ENCODE measurements at regions of chr15 and their contacts with region 1.

Region 1: DNA sequence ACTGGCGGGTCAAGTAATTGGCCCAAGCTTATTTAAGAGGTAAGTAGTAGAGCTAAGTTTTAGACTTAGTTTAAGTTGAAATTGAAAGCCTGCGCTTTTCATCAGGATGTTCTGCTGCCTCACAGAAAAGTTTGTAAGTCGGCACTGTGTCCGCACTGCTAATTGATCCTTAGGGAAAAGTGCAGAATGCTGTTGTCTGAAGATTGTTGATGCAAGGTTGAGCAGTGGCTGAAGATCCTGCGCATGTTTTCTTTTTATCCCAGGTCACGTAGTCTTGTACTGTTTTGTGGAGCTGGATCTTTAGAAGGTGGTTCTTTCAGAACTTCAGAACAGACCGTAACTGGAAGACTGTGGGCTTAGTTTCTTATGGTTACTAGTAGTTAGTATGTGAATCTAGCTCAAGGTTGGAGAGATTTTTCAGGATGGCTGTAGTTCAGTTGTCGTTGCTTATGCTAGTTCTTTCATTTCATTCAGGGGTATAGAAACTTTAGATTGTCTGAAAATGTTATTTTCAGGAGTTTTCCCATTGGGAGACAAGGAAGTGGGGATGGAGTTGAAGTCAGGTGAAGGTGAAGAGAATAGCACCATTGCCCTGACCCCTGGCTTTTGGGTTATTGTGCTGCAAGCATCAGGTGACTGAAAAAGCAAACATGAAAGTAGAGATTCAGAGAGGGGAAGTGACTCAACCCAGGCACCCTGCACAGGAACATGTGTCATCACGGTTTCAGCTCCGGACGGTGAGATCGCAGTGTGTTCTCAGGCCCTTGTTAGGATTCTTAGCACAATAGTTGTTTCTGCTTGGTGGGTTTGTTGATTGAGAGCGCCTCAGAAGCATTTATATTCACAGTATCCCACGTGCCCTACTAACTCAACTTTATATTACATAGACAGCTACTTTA is 32.8 kb downstream of the AKAP13 start:
- DNase-seq: peak; percentile 95
- H3K27ac ChIP-seq: peak overlapping the region; percentile 61
- CTCF ChIP-seq: no peak

Region 2: DNA sequence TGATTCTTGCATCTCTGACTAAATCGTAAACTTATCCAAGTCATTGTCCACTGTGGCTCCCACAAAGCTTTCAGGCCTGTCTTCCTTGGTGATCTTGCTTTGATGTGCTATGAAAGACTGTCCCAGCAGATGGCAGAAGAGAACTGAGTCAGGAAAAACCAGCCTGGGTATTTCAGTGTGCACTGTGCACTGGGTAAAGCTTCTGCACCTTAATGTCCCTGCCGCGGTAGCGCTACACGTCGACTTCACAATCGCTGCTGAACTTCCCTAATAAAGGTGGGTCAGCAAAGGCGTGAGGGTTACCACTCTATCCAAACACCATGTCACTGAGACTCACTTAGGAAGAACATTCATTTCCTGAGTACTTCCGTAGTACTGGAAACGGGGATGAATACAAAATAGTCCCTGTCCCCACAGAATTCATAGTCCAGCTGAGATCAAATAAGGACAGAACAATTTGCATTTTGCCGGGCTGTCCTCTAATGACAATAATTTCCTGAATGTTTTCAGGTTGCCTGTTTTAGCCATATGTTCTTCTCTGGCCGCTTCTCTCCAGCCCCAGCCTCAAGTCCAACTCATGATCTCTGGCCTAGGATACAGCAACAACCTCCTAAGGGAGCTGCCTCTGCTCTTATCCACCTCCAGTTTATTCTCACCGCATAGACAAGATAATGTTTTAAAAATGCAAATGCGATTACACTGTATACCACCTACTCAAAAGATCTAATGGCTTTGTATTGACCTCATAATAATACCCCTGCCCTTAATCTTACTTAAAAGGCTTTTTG is 116.4 kb before region 1 on chr15:
- CTCF ChIA-PET with region 1: interaction called, 31 read pairs
- POLR2A ChIA-PET with region 1: no interaction called
- DNase-seq: peak; percentile 72
- H3K27ac ChIP-seq: no peak overlapping the region
- CTCF ChIP-seq: peak; percentile 93

Region 3: GRCh38 chr15:85330901-85331588 is 82.2 kb before region 1 on chr15:
- CTCF ChIA-PET with region 1: interaction called, 21 read pairs
- POLR2A ChIA-PET with region 1: no interaction called
- DNase-seq: peak; percentile 83
- H3K27ac ChIP-seq: peak overlapping the region; percentile 84
- CTCF ChIP-seq: peak; percentile 98